ENCODE measurements at regions of chr1 and their contacts with region 1.

Region 1: DNA sequence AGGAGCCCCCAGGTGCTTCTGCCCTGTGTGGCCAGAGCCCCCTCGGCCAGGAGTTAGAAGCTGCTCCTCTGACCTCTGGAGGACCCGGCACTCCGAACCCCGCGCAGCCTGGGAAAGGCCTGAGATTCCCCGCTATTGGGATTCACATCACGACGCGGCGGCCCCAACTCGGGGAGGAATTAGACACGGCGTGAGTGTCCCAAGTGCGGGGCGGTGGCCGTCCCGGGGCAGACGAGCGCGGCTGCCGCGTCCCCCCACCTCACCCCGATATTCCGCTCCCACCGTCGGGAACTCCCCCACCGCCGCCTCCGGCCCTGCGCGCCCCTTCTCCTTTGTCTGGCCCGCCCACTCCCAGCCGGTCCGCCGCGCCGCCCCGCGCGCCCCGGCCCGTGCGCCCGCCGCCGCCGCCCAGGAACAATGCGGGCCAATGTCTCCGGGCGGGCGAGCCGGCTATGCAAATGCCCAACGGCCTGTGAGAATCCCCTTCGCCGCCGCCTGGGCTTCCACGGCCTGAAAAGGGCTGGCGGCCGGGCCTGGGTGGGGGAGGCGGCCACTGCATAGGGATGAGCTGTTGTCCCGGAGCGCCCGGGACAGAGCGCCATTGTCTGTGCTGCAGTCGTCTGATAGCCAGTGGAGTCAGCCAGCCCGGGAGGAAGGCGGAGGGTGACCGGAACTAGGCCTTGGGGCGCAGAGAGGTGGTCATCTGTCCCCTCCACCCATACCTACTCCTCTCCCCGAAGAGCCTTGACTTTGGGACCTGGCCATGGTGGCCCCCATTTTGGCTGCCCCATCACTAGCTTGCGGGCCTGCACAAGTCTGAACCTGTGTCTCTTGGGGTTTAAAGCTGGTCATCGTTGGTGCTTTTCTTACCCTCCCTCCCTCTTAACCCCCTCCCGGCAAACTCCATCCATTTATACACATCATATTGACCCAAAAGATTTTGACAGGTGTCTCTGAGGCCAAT is 19.4 kb downstream of the RHBG start:
- DNase-seq: peak; percentile 87 to 98 (median 94)

Region 2: GRCh38 chr1:156412653-156413321 is 24.3 kb after region 1 on chr1:
- intact Hi-C with region 1: loop called (anchors 1 kb)
- DNase-seq: peak in 29 of 42 donors; percentile 35 to 83 (median 67)

Region 3: GRCh38 chr1:156465747-156466365 is 77.4 kb after region 1 on chr1:
- intact Hi-C with region 1: no loop called
- DNase-seq: peak in 2 of 42 donors; percentile 3 to 7